Upper lobe of right lung (tissue), 1 donor: ENCODE measurements at regions of chr4 and their contacts with region 1.

Region 1: DNA sequence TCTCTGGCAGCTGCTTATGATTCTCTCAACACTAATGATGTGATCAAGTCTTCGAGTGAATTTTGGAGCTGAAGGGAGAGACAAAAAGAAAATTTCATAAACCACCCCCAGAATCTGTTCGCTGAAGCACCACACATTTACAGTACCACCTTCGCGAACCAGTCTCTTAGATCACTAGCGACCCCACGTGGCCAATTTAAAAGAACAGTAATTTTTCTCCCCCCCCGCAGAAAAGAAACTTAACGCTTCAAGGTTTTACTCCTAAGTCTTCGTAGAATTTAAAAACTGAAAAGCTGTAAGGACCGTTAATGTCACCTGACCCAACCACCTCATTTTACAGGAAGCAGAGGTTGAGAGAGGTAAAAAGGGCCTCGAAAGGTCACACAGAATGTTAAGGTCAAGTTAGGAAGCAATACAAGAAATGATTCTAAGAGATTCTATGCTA is 187.5 kb downstream of the QDPR start:
- DNase-seq: no peak
- ATAC-seq: peak; percentile 58
- H3K4me3 ChIP-seq: no peak overlapping the region
- H3K27ac ChIP-seq: no peak overlapping the region
- H3K4me1 ChIP-seq: peaks cover 27% of the 10 kb centered on the region
- H3K27me3 ChIP-seq: no peaks in the 10 kb centered on the region
- CTCF ChIP-seq: peak; percentile 61

Region 2: GRCh38 chr4:16916719-16917337 is 407.6 kb before region 1 on chr4:
- intact Hi-C with region 1: loop called (anchors 10 kb)
- DNase-seq: no peak
- ATAC-seq: peak; percentile 89
- H3K4me3 ChIP-seq: no peak overlapping the region
- H3K27ac ChIP-seq: no peak overlapping the region
- H3K4me1 ChIP-seq: no peaks in the 10 kb centered on the region
- H3K27me3 ChIP-seq: no peaks in the 10 kb centered on the region
- CTCF ChIP-seq: peak; percentile 74